ENCODE measurements at regions of chr11 and their contacts with region 1.

Region 1: DNA sequence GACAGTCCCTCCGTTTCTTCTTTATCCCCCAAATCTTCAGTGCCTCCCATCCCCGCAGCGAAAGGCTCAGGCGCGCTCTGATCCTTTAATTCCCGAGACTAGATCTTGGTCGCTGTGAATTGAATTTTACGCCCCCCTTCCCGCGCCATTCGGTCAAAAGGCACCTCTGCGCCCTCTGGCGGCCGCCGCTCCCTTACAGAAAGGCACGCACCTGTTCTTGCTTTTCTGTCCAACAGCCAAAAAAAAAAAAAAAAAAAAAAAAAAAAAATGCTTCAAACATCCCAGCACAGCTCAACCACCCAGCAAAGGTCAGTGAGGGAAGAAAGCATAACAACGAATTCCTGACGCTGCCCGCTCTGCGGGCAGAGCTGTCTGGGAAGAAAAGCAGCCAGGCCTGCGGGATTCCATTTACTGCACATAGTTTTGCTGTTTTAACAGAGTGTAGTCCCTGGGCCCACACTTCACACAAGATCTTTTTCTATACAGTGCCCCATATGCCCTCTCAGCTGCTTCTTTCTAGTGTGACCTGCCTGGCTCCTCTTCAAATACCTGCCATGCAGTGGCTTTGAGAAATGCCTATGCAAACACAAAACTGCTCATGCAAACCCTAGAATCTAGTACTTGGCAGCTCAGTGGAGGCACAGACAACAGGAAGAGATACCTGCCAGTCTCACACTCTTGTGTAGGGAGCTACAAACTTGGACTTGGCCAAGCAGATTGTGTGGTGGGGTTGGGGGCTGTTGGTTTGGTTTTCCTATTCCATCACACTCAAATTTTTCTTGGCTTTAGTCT is 1.3 kb upstream of the ESAM start:
- DNase-seq: peak; percentile 88
- H3K4me3 ChIP-seq: peak overlapping the region; percentile 82
- H3K27ac ChIP-seq: peak overlapping the region; percentile 98
- H3K4me1 ChIP-seq: peaks cover 52% of the 10 kb centered on the region
- H3K27me3 ChIP-seq: peaks cover 47% of the 10 kb centered on the region
- CTCF ChIP-seq: peak; percentile 81

Region 2: GRCh38 chr11:124673333-124674167 is 89.8 kb before region 1 on chr11 and contains the starts of genes SIAE and SPA17:
- intact Hi-C with region 1: loop called (anchors 5 kb)
- DNase-seq: peak; percentile 95
- H3K4me3 ChIP-seq: peak within 1 kb of the TSS; percentile 76
- H3K27ac ChIP-seq: peak within 1 kb of the TSS; percentile 90
- H3K4me1 ChIP-seq: peaks cover 39% of the 10 kb centered on the region
- H3K27me3 ChIP-seq: no peaks in the 10 kb centered on the region
- CTCF ChIP-seq: no peak
- total RNA-seq, gene SIAE: 68.8 TPM
- total RNA-seq, gene SPA17: 3.0 TPM

Region 3: GRCh38 chr11:124837491-124837856 is 74.1 kb after region 1 on chr11:
- intact Hi-C with region 1: loop called (anchors 10 kb)
- DNase-seq: no peak
- H3K4me3 ChIP-seq: no peak overlapping the region
- H3K27ac ChIP-seq: no peak overlapping the region
- H3K4me1 ChIP-seq: peaks cover 25% of the 10 kb centered on the region
- H3K27me3 ChIP-seq: peaks cover 76% of the 10 kb centered on the region
- CTCF ChIP-seq: no peak

Region 4: DNA sequence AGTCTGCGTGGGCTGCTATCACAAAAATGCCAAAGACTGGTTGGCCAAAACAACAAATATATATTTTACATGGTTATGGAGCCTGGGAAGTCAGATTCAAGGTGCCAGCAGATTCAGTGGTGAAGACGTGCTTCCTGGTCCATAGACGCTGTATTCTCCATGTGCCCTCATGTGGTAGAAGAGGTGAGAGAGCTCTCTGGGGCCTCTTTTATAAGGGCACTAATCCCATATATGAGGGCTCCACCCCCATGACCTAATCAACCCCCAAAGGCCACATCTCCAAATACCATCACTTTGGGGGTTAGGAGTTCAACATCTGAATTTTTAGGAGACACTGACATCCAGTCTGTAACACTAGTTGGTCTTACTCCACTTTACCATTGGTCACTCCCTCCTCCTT is 92.1 kb after region 1 on chr11:
- intact Hi-C with region 1: no loop called
- DNase-seq: no peak
- H3K4me3 ChIP-seq: no peak overlapping the region
- H3K27ac ChIP-seq: no peak overlapping the region
- H3K4me1 ChIP-seq: no peaks in the 10 kb centered on the region
- H3K27me3 ChIP-seq: peaks cover 100% of the 10 kb centered on the region
- CTCF ChIP-seq: no peak